ENCODE measurements at regions of chr20 and their contacts with region 1.

Region 1: GRCh38 chr20:23113990-23114389 is 27.9 kb upstream of the CD93 start:
- DNase-seq: peak in 2 of 3 donors; percentile 36 to 40
- H3K4me3 ChIP-seq: no peak overlapping the region
- H3K27ac ChIP-seq: no peak overlapping the region
- H3K4me1 ChIP-seq: peaks cover 2 to 34% (median 14%) of the 10 kb centered on the region in 4 experiments
- H3K27me3 ChIP-seq: no peaks in the 10 kb centered on the region

Region 2: DNA sequence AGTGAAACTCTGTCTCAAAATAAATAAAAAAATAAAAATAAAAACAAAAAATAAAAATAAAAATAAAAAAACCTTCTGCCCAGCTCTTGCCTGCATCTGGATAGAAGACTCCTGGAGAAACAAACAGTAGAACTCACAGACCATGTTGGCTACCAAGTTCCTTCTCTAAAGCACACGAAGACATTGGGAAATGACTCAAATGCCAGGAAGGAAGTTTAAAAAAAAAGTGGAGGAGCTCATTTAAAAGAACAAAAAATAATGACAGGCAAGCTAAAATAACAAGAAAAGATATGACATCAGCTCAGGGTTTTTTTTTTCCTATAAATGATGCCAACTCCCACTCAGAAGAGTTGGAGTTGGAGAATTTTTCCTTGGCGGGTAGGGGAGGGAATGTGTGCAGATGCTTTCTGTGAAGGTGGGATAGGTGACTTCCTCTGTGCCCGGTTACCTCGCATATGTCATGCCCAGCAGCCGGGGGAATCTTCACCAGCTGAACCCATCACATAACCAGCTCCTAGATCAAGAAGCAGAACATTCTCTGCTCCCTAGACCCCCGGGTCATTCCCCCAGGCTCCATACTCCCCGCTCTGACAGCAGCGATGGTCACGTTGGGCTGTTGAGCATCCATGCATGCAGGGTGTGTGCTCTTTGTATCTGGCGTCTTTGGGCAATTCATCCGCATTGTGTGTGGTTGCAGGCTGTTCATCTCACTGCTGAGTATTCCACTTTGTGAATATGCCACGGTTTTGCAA is 10.5 kb before region 1 on chr20:
- CTCF ChIA-PET with region 1: interaction called, 19 read pairs
- POLR2A ChIA-PET with region 1: interaction called, 3 read pairs
- DNase-seq: peak in 2 of 3 donors; percentile 43 to 61
- H3K4me3 ChIP-seq: no peak overlapping the region
- H3K27ac ChIP-seq: no peak overlapping the region
- H3K4me1 ChIP-seq: peaks cover 2 to 27% (median 12%) of the 10 kb centered on the region in 4 experiments
- H3K27me3 ChIP-seq: no peaks in the 10 kb centered on the region